WTC11 (cell line): ENCODE measurements at regions of chr6 and their contacts with region 1.

Region 1: GRCh38 chr6:28838634-28839442 is 84.9 kb downstream of the TRIM27 start:
- DNase-seq: peak; percentile 95
- ATAC-seq: peak; percentile 89
- H3K4me3 Mint-ChIP-seq: peak overlapping the region; percentile 99
- H3K27ac Mint-ChIP-seq: peak overlapping the region; percentile 92
- H3K4me1 Mint-ChIP-seq: peaks cover 11% of the 10 kb centered on the region
- H3K27me3 Mint-ChIP-seq: peaks cover 40% of the 10 kb centered on the region
- CTCF ChIP-seq: peak; percentile 58; the same call in 1 of the 2 replicates

Region 2: GRCh38 chr6:27031302-27031701 is 1807.5 kb before region 1 on chr6:
- CTCF ChIA-PET with region 1: no interaction called
- POLR2A ChIA-PET with region 1: no interaction called
- DNase-seq: no peak
- ATAC-seq: no peak
- H3K4me3 Mint-ChIP-seq: no peak overlapping the region
- H3K27ac Mint-ChIP-seq: no peak overlapping the region
- H3K4me1 Mint-ChIP-seq: peaks cover 4% of the 10 kb centered on the region; the same call in 1 of the 2 replicates
- H3K27me3 Mint-ChIP-seq: peaks cover 4% of the 10 kb centered on the region
- CTCF ChIP-seq: no peak

Region 3: GRCh38 chr6:28618898-28619555 is 219.8 kb before region 1 on chr6:
- CTCF ChIA-PET with region 1: no interaction called
- POLR2A ChIA-PET with region 1: no interaction called
- DNase-seq: no peak
- ATAC-seq: no peak; the same call in 1 of the 2 replicates
- H3K4me3 Mint-ChIP-seq: no peak overlapping the region
- H3K27ac Mint-ChIP-seq: no peak overlapping the region
- H3K4me1 Mint-ChIP-seq: peaks cover 20% of the 10 kb centered on the region
- H3K27me3 Mint-ChIP-seq: peaks cover 39% of the 10 kb centered on the region
- CTCF ChIP-seq: no peak

Region 4: GRCh38 chr6:28769626-28770402 is 69.0 kb before region 1 on chr6:
- CTCF ChIA-PET with region 1: interaction called, 12 read pairs
- POLR2A ChIA-PET with region 1: no interaction called
- DNase-seq: peak; percentile 63
- ATAC-seq: peak; percentile 5
- H3K4me3 Mint-ChIP-seq: peak overlapping the region; percentile 57
- H3K27ac Mint-ChIP-seq: no peak overlapping the region
- H3K4me1 Mint-ChIP-seq: peaks cover 95% of the 10 kb centered on the region
- H3K27me3 Mint-ChIP-seq: peaks cover 100% of the 10 kb centered on the region
- CTCF ChIP-seq: no peak

Region 5: GRCh38 chr6:28824793-28825731 is 13.8 kb before region 1 on chr6:
- CTCF ChIA-PET with region 1: interaction called, 26 read pairs
- POLR2A ChIA-PET with region 1: interaction called, 3 read pairs
- DNase-seq: no peak
- ATAC-seq: peak; percentile 80
- H3K4me3 Mint-ChIP-seq: peak overlapping the region; percentile 81
- H3K27ac Mint-ChIP-seq: no peak overlapping the region
- H3K4me1 Mint-ChIP-seq: peaks cover 16% of the 10 kb centered on the region
- H3K27me3 Mint-ChIP-seq: peaks cover 94% of the 10 kb centered on the region
- CTCF ChIP-seq: no peak

Region 6: DNA sequence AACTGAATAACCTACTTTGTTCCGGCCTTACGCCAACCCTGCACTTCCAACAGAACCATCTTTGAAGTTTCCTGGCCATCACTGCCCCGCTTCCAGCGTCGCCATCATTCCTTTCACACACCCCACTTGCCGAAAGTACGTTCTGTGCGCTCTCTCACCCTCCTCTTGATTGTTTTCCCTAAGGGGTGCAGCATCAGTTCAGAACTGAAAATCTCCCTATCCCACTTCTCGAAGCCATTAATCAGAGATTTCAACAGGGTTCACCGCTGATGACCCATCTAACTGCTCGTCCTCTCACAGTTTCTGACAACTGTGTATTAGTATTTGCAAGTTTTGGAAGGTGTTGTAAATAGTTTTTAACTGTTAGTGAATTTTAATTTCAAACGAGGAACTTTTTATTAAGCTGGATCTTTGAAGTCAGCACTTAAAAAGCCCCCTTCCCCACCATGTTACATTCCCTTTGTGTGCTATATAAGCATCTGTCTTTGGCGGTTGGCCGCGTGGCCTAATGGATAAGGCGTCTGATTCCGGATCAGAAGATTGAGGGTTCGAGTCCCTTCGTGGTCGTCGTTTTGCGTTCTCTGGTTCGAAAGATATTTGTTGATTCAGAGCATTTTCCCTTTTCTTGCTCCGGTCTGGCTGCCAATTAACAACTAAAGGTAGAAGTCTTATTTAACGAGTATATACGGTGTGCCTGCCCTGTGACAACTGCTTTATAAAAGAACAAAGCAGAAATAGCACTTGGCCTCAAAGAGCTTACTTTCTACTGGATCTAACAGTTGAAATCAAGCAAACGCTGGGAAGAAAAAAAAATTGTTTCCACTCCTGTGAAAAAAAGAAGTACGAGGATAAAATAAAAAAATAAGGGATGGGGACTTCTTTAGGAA is 42.3 kb after region 1 on chr6:
- CTCF ChIA-PET with region 1: interaction called, 12 read pairs
- POLR2A ChIA-PET with region 1: interaction called, 3 read pairs
- DNase-seq: peak; percentile 85
- ATAC-seq: peak; percentile 84
- H3K4me3 Mint-ChIP-seq: peak overlapping the region; percentile 97
- H3K27ac Mint-ChIP-seq: peak overlapping the region; percentile 38
- H3K4me1 Mint-ChIP-seq: peaks cover 16% of the 10 kb centered on the region
- H3K27me3 Mint-ChIP-seq: no peaks in the 10 kb centered on the region
- CTCF ChIP-seq: no peak

Region 7: GRCh38 chr6:28923318-28924102 is 84.7 kb after region 1 on chr6 and contains the start of gene TRIM27:
- CTCF ChIA-PET with region 1: interaction called, 12 read pairs
- POLR2A ChIA-PET with region 1: interaction called, 11 read pairs
- DNase-seq: peak; percentile 87
- ATAC-seq: peak; percentile 90
- H3K4me3 Mint-ChIP-seq: peak within 1 kb of the TSS; percentile 82
- H3K27ac Mint-ChIP-seq: peak within 1 kb of the TSS; percentile 88
- H3K4me1 Mint-ChIP-seq: peaks cover 20% of the 10 kb centered on the region
- H3K27me3 Mint-ChIP-seq: no peaks in the 10 kb centered on the region
- CTCF ChIP-seq: no peak
- total RNA-seq, gene TRIM27: 65.8 to 79.8 TPM (median 68.3 TPM) in 3 replicates

Region 8: DNA sequence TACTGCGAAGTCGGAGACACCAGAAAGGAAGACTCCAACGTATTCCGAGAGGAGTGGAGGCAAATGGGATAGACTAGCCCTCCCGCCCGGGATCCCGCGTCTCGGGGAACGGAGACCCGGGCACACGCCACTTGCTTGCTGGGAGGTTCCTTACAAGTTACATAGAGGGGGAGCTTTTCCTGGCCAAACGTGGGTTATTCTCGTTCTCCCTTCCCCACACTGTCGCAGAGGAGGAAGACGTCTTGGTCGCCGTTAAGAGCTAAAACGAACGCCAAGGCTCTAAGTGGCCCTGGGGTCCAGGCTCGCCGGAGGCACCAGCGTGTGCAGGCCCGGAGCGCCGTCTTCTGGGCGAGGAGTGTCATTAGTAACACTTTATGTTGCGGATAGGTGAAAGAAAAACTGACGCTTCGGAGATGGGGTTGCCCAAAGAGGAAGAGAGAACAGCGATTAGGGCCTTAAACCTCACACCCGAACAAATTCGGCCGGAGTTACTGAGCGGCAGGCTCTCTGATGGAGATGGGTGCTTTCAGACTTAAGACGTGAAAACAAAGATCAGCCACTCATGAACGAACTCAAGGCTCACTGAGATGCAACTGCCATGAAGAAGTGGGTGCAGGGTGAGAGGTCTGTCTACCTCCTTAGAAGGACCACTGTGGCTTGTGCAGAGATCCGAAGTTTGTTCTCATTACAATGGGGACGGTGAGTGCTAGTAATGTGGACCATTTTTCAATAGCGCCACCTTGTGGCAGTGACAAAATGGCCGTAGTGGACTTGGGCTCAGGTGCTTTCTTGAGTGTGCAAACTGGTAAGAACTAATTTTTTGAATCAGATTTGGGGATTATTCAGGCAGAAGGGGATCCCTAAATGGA is 178.0 kb after region 1 on chr6:
- CTCF ChIA-PET with region 1: interaction called, 41 read pairs
- POLR2A ChIA-PET with region 1: interaction called, 3 read pairs
- DNase-seq: peak; percentile 87
- ATAC-seq: peak; percentile 89
- H3K4me3 Mint-ChIP-seq: peak overlapping the region; percentile 87
- H3K27ac Mint-ChIP-seq: no peak overlapping the region
- H3K4me1 Mint-ChIP-seq: no peaks in the 10 kb centered on the region; the same call in none of the 2 replicates
- H3K27me3 Mint-ChIP-seq: peaks cover 43% of the 10 kb centered on the region
- CTCF ChIP-seq: peak; percentile 75